Cardiac septum (tissue), 1 donor: ENCODE measurements at regions of chr2 and their contacts with region 1.

Region 1: GRCh38 chr2:43219383-43220228 is 6.8 kb downstream of the ZFP36L2 start:
- DNase-seq: peak; percentile 96

Region 2: DNA sequence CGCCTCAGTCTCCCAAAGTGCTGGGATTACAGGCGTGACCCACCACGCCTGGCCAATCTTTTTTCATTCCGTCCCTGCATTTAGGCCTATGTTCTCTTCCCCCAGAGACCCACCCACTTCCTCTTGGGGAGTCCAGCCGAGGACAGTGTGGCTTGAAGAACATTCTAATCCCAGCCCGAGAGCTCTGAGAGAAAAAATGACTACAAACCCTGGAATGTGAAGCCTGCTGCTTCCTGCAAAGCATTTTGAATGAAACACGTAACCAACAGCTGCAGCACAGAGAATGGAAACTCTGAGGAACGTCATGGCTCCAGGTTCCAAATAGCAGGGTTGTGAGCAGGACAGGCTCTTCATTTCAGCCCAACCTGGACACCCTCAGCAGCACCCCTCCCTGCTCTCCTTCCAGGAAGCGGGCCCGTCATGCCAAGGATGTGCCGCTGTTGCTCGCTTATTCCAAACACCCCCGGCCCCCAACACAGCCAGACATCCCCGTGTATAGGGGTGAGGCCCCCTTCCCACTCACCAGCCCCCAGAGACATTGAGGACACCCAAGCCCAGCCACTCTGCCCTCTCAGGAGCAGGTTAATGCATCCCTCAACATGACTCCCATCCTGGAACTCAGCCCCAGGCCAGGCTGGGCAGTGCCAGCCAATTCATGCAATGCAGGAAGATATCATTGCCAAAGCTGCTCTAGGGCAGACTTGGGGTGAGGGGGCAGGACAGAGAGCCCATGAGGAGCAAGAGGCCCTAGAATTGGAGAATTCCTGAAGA is 133.0 kb before region 1 on chr2:
- intact Hi-C with region 1: loop called (anchors 5 kb)
- DNase-seq: peak; percentile 81

Region 3: DNA sequence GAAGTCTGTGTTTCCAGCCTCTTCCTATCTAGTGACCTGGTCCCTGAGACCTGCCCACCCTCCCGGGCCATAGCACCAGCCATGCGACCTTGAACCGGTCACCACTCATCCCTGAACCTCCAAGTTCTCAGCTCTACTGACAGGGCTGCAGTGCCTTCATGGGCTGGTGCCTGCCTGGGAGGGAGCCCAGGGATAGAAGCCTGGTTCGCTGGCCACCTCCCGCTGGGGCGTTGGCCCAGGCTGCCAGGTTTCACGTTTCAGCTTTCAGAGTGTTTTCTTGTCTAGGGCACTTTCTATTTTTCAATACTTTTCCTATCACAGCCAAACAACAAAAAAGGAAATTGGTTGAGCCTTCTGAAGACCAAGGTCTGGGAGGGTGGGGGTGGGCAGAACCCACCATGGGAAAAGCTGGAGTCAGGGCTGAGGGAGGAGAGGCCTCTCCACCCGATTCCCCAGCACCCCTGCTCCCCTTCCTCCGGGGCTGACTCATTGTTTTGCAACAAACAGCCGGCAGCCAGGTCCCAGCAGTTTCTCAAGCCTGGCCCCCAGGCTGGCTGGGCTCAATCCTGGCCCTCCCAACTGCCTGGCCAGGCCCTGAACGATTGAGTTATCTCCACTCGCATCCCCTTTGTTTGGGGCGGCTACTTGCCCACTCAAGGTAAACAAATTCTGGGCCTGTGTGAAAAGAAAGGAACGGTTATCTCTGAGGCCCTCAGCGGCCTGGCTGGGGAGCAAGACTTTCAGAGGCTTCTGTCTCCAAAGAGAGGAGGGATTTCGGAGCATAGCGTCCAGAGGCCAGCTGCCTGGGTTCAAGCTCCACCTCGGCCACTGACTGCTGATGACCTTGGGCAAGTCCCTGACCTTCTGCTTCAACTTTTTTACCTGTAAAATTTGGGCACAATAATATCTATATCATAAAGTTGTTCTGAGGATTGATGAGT is 40.7 kb before region 1 on chr2:
- intact Hi-C with region 1: loop called (anchors 5 kb)
- DNase-seq: peak; percentile 88